ENCODE measurements at regions of chr10 and their contacts with region 1.

Region 1: DNA sequence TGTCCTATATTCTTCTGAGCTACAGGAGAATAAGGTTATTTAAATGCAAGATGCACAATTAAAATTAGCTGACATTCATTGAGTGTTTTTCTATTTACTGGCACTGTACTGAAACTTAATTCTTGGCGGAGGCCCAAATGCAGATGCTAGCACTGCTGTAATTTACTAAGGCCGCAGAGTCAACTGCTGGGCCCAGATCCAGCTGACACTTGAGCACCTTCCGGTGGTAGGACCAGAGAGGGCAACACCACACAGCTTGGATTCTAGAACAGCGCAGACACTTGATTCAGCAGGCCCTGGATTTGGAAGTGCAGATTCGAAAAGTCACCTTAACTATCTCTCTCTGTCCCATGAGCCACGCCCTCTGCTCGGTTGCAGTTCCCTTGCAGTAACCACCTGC is 228.6 kb upstream of the TMEM72 start:
- DNase-seq: peak in 1 of 5 donors; percentile 44
- ATAC-seq: peak in 1 of 4 donors; percentile 36
- H3K4me3 ChIP-seq: no peak overlapping the region
- H3K27ac ChIP-seq: no peak overlapping the region
- H3K4me1 ChIP-seq: peaks cover 0 to 41% (median 0%) of the 10 kb centered on the region in 12 donors
- H3K27me3 ChIP-seq: no peaks in the 10 kb centered on the region
- CTCF ChIP-seq: no peak
- POLR2A ChIP-seq: no peak

Region 2: DNA sequence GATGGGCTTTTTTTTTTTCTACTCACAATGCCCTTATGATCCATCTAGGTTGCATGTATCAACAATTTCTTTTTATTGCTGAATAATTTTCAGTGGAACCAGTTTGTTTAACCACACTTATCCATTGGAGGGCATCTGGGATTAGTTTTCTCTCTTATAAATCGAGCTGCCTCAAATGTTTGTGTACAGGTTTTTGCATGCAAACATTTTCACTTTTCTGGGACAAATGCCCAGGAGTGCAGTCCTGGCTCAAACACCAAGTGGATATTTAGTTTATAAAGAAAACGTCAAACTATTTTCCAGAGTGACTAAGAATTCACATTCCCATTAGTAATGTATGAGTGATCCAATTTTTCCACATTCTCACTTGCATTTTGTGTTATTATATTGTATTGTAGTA is 611.0 kb before region 1 on chr10:
- intact Hi-C with region 1: no loop called
- DNase-seq: no peak
- ATAC-seq: no peak
- H3K4me3 ChIP-seq: no peak overlapping the region
- H3K27ac ChIP-seq: no peak overlapping the region
- H3K4me1 ChIP-seq: peaks cover 0 to 20% (median 12%) of the 10 kb centered on the region in 12 donors
- H3K27me3 ChIP-seq: no peaks in the 10 kb centered on the region
- CTCF ChIP-seq: no peak
- POLR2A ChIP-seq: no peak

Region 3: GRCh38 chr10:44253769-44254462 is 428.6 kb before region 1 on chr10:
- intact Hi-C with region 1: no loop called
- DNase-seq: peak; percentile 64 to 84 (median 81)
- ATAC-seq: peak; percentile 53 to 90 (median 82)
- H3K4me3 ChIP-seq: no peak overlapping the region
- H3K27ac ChIP-seq: peak overlapping the region in 1 of 12 donors; percentile 42
- H3K4me1 ChIP-seq: peaks cover 0 to 21% (median 7%) of the 10 kb centered on the region in 12 donors
- H3K27me3 ChIP-seq: no peaks in the 10 kb centered on the region
- CTCF ChIP-seq: no peak
- POLR2A ChIP-seq: no peak

Region 4: GRCh38 chr10:44517635-44518034 is 164.9 kb before region 1 on chr10:
- intact Hi-C with region 1: no loop called
- DNase-seq: no peak
- ATAC-seq: no peak
- H3K4me3 ChIP-seq: no peak overlapping the region
- H3K27ac ChIP-seq: no peak overlapping the region
- H3K4me1 ChIP-seq: peaks cover 0 to 9% (median 0%) of the 10 kb centered on the region in 12 donors
- H3K27me3 ChIP-seq: no peaks in the 10 kb centered on the region
- CTCF ChIP-seq: peak in 4 of 12 donors; percentile 5 to 27 (median 18)
- POLR2A ChIP-seq: no peak

Region 5: DNA sequence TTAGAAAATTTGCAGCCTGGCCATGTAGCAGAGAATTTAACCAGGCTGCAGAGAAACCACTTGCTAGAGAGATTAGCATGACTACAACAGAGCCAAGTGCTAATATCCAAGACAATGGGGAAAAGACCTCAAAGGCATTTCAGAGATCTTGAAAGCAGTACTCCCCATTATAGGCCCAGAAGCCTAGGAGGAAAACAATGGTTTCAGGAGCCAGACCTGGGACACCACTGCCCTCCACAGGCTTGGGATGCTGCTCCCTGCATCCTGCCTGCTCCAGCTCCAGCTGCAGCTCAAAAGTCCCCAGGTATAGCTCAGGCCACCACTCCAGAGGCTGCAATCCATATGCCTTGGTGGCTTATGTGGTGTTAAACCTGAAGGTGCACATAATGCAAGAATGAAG is 127.1 kb after region 1 on chr10:
- intact Hi-C with region 1: loop called in 1 of 10 experiments (anchors 5 kb)
- DNase-seq: no peak
- ATAC-seq: peak in 1 of 4 donors; percentile 31
- H3K4me3 ChIP-seq: no peak overlapping the region
- H3K27ac ChIP-seq: no peak overlapping the region
- H3K4me1 ChIP-seq: peaks cover 0 to 52% (median 23%) of the 10 kb centered on the region in 12 donors
- H3K27me3 ChIP-seq: no peaks in the 10 kb centered on the region
- CTCF ChIP-seq: peak in 4 of 12 donors; percentile 5 to 25 (median 12)
- POLR2A ChIP-seq: no peak

Measured in heart left ventricle (tissue), 16 donors.